IMR-90 (cell line): ENCODE measurements at regions of chr20 and their contacts with region 1.

Region 1: GRCh38 chr20:47379433-47380150 is 23.1 kb upstream of the ZMYND8 start:
- DNase-seq: peak; percentile 97
- ATAC-seq: peak; percentile 69
- H3K4me3 ChIP-seq: no peak overlapping the region
- H3K27ac ChIP-seq: no peak overlapping the region; the same call in 1 of the 2 replicates
- H3K4me1 ChIP-seq: peaks cover 9% of the 10 kb centered on the region
- H3K27me3 ChIP-seq: no peaks in the 10 kb centered on the region
- CTCF ChIP-seq: no peak
- POLR2A ChIP-seq: no peak; the same call in 1 of the 2 replicates
- RAD21 ChIP-seq: no peak; the same call in none of the 2 replicates

Region 2: GRCh38 chr20:46757754-46758678 is 621.6 kb before region 1 on chr20:
- CTCF ChIA-PET with region 1: interaction called, 3 read pairs
- POLR2A ChIA-PET with region 1: no interaction called
- dilution Hi-C with region 1: no loop called
- in situ Hi-C with region 1: loop called (anchors 5 kb)
- intact Hi-C with region 1: loop called (anchors 1 kb)
- DNase-seq: peak; percentile 60
- ATAC-seq: peak; percentile 89
- H3K4me3 ChIP-seq: no peak overlapping the region
- H3K27ac ChIP-seq: no peak overlapping the region
- H3K4me1 ChIP-seq: peaks cover 4% of the 10 kb centered on the region
- H3K27me3 ChIP-seq: no peaks in the 10 kb centered on the region
- CTCF ChIP-seq: peak; percentile 96
- POLR2A ChIP-seq: no peak
- RAD21 ChIP-seq: peak; percentile 92

Region 3: DNA sequence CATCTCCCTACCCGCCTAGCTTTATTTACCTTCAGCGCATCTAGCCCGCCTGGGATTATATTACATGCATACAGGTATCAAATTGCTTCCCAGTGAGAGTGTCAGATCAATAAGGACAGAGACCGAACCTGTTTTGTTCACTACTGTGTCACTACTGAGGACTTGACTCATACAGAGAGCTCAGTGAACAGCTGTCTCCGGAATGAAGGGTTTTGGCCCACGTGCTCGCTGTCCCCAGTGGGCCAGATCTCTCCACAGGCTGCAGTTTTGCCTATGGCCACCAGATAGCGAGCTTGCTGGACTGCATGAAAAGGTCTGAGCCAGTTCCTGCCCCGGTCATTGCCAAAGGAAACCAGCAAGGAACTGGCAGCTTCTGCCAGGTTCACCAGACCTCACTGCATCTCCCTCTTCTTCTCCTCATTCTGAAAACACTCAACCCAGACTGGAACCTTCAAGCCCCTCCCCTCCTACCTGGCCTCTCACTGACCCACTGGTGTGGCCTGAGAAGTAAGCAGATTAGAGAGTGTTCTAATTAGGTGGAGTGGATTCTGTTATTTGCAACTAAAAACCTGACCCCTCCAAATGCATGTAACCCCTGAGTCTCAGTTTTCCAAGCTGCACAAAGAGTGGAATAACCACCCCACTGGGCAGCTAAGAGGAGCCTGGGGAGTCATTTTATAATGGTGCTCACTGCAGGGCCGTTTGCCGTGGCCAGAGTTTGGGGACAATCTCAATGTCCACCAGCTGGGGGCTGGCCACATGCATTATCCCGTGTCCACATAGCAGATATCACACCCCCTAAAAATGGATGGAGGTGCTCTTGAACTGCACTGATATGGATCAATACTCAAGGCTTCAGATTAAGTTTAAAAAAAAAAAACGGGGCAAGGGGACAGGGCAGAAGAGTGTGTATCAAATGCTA is 173.8 kb before region 1 on chr20:
- CTCF ChIA-PET with region 1: interaction called, 17 read pairs
- POLR2A ChIA-PET with region 1: no interaction called
- dilution Hi-C with region 1: no loop called
- in situ Hi-C with region 1: no loop called
- intact Hi-C with region 1: no loop called
- DNase-seq: peak; percentile 79
- ATAC-seq: peak; percentile 83
- H3K4me3 ChIP-seq: no peak overlapping the region
- H3K27ac ChIP-seq: no peak overlapping the region
- H3K4me1 ChIP-seq: peaks cover 2% of the 10 kb centered on the region; the same call in 1 of the 2 replicates
- H3K27me3 ChIP-seq: no peaks in the 10 kb centered on the region
- CTCF ChIP-seq: peak; percentile 63
- POLR2A ChIP-seq: no peak
- RAD21 ChIP-seq: peak; percentile 65

Region 4: DNA sequence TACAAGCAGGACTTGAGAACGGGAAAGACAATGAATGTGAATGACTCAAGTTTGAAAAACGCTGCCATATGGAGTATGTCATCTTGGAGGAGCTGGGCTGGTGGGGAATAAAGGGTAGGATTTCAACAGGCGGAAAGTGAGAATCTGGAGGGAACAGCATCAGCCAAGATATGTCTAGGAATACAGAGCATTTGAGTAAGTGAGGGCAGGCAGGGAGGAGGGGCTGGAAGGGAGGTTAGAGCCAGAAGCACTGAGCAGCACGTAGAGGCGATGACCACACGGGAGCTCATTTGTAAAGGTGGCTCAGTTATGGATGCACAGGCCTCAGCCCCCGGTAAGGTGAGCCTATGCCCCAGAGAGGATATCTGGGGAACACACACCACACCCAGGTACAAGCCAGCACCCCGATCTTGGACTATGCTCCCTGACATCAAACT is 138.2 kb before region 1 on chr20:
- CTCF ChIA-PET with region 1: interaction called, 14 read pairs
- POLR2A ChIA-PET with region 1: no interaction called
- dilution Hi-C with region 1: no loop called
- in situ Hi-C with region 1: no loop called
- intact Hi-C with region 1: no loop called
- DNase-seq: peak; percentile 99
- ATAC-seq: peak; percentile 93
- H3K4me3 ChIP-seq: no peak overlapping the region
- H3K27ac ChIP-seq: peak overlapping the region; percentile 98
- H3K4me1 ChIP-seq: peaks cover 15% of the 10 kb centered on the region
- H3K27me3 ChIP-seq: no peaks in the 10 kb centered on the region
- CTCF ChIP-seq: no peak
- POLR2A ChIP-seq: no peak
- RAD21 ChIP-seq: no peak

Region 5: GRCh38 chr20:47317127-47317895 is 62.3 kb before region 1 on chr20:
- CTCF ChIA-PET with region 1: interaction called, 17 read pairs
- POLR2A ChIA-PET with region 1: no interaction called
- dilution Hi-C with region 1: no loop called
- in situ Hi-C with region 1: no loop called
- intact Hi-C with region 1: no loop called
- DNase-seq: peak; percentile 98
- ATAC-seq: peak; percentile 63
- H3K4me3 ChIP-seq: no peak overlapping the region
- H3K27ac ChIP-seq: peak overlapping the region; percentile 95
- H3K4me1 ChIP-seq: peaks cover 46% of the 10 kb centered on the region
- H3K27me3 ChIP-seq: no peaks in the 10 kb centered on the region
- CTCF ChIP-seq: no peak
- POLR2A ChIP-seq: peak; percentile 78; the same call in 1 of the 2 replicates
- RAD21 ChIP-seq: peak; percentile 14; the same call in 1 of the 2 replicates

Region 6: DNA sequence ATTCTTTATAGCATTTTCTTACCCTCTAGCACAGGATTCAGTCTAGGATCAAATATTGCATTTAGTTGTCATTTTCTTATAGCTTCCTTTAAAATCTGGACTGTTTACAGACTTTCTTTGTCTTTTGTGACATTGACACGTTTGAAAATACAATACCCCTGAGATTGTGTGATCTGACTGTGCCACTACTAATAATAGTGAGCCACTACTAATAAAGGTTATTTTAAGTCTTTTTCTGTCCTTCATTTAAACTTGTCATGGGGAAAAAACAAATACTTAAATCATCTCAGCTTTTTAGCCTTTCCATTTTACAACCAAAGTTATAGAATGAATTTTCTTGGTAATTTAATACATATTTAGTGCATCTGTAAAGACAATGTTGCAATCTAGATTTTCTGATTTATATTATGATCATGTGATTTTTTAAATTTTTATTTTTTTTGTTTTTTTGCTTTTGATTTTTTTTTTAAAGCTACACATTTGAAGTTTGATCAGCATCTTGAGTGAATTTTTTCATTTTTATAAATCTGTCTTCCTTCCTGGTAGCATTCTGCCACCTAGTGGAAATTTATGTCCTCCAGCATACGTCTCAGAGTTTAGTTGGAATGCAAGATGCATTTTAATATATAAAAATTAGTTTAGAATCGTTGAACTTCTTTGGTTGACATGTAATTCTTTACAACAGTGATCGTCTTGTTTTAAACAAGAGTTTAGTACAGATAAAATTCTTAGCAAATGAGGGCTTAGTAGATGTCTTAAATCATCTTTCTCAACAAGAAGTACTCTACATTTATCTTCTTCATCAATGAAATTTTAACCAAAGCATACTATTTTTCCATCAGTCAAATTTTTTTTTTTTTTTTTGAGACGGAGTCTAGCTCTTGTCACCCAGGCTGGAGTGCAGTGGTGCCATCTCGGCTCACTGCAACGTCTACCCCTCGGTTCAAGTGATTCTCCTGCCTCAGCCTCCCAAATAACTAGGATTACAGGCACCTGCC is 241.5 kb after region 1 on chr20:
- CTCF ChIA-PET with region 1: interaction called, 7 read pairs
- POLR2A ChIA-PET with region 1: no interaction called
- dilution Hi-C with region 1: no loop called
- in situ Hi-C with region 1: loop called (anchors 5 kb)
- intact Hi-C with region 1: loop called (anchors 1 kb)
- DNase-seq: peak; percentile 82
- ATAC-seq: peak; percentile 68
- H3K4me3 ChIP-seq: no peak overlapping the region
- H3K27ac ChIP-seq: no peak overlapping the region
- H3K4me1 ChIP-seq: no peaks in the 10 kb centered on the region
- H3K27me3 ChIP-seq: no peaks in the 10 kb centered on the region
- CTCF ChIP-seq: peak; percentile 92
- POLR2A ChIP-seq: 0 out of 2 replicates have a peak, but pooled peaks have one; percentile 34
- RAD21 ChIP-seq: peak; percentile 91